B cell (primary cell): ENCODE measurements at regions of chr19 and their contacts with region 1.

Region 1: DNA sequence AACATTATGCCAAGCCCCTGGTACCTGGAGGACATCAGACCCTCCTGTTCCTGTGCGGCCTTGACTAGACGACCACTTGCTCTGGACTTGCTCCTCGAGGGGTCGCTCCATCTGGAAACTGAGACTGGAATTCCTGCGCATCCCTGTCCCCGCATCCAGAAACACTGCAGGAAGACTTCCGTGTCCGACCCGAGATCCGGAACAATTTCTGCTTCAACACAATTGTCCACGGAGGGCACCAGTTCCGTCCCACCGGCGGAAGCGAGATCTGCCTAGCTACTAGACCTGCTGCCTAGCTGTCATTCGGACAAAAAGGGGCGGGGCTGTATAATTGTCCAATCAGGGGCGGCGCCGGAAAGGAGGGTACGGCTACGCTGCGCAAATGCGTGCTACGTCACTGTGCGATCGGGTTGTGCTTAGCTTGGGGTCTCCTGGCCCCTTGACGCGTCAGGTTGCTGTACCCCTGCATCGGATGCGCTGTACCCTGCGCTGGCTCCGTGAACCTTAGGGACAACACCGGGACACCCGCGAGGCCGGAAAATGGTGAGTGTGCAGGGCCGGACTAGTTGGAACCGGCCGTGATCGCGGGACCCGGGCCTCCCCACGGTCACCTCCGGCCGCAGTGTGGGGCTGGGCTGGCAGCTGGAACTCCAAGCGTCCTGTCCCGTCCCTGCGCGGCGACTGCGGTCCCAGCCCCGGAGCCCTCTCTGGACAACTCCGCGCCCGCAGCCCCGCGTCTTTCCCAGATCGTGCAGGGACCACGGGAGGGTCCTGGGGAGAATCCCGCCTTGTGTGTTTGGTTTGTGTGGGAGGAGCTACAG is at the starts of genes ZNF490 and ZNF791:
- DNase-seq: peak; percentile 97
- ATAC-seq: peak; percentile 73
- H3K4me3 ChIP-seq: peak within 1 kb of the TSS; percentile 89 to 99 (median 98)
- H3K4me3 Mint-ChIP-seq: peak within 1 kb of the TSS; percentile 100
- H3K27ac ChIP-seq: peak within 1 kb of the TSS; percentile 93 to 96
- H3K27ac Mint-ChIP-seq: peak within 1 kb of the TSS; percentile 100
- H3K4me1 ChIP-seq: peaks cover 50 to 72% of the 10 kb centered on the region in 2 donors
- H3K4me1 Mint-ChIP-seq: peaks cover 54% of the 10 kb centered on the region
- H3K27me3 ChIP-seq: no peaks in the 10 kb centered on the region
- H3K27me3 Mint-ChIP-seq: no peaks in the 10 kb centered on the region
- CTCF ChIP-seq: no peak
- total RNA-seq, gene ZNF490: 19.9 and 21.2 TPM in 2 replicates
- total RNA-seq, gene ZNF791: 56.0 and 57.9 TPM in 2 replicates

Region 2: GRCh38 chr19:12551060-12551832 is 59.5 kb before region 1 on chr19 and contains the start of gene ZNF564:
- CTCF ChIA-PET with region 1: no interaction called
- POLR2A ChIA-PET with region 1: no interaction called
- intact Hi-C with region 1: loop called (anchors 1 kb)
- DNase-seq: peak; percentile 96
- ATAC-seq: peak; percentile 98
- H3K4me3 ChIP-seq: peak within 1 kb of the TSS; percentile 81 to 95 (median 86)
- H3K4me3 Mint-ChIP-seq: peak within 1 kb of the TSS; percentile 100
- H3K27ac ChIP-seq: peak within 1 kb of the TSS; percentile 70 to 87
- H3K27ac Mint-ChIP-seq: peak within 1 kb of the TSS; percentile 94
- H3K4me1 ChIP-seq: peaks cover 20 to 29% of the 10 kb centered on the region in 2 donors
- H3K4me1 Mint-ChIP-seq: peaks cover 45% of the 10 kb centered on the region
- H3K27me3 ChIP-seq: no peaks in the 10 kb centered on the region
- H3K27me3 Mint-ChIP-seq: no peaks in the 10 kb centered on the region
- CTCF ChIP-seq: no peak
- total RNA-seq, gene ZNF564: 31.8 and 35.8 TPM in 2 replicates

Region 3: DNA sequence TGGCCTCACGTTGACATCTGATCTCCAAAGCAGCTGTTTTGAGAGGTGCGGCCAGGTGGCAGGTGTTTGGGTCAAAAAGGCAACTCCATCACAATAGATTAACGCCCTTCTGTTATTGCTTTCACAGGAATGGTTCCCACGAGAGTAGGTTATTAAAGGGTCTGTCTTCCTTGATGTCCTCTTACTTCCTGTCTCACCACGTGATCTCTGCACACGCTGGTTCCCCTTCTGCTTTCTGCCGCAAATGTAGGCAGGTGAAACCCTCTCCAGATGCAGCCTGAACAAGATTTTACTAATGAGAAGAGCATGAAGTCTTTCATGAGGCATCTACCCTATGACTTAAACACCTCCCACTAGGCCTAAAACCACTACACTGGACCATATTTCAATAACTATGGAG is 36.7 kb before region 1 on chr19:
- CTCF ChIA-PET with region 1: interaction called, 4 read pairs
- POLR2A ChIA-PET with region 1: interaction called, 4 read pairs
- intact Hi-C with region 1: loop called (anchors 1 kb)
- DNase-seq: peak; percentile 85
- ATAC-seq: peak; percentile 94
- H3K4me3 ChIP-seq: peak overlapping the region in 2 of 5 experiments; percentile 17 to 21
- H3K4me3 Mint-ChIP-seq: peak overlapping the region; percentile 61
- H3K27ac ChIP-seq: peak overlapping the region; percentile 77 to 85
- H3K27ac Mint-ChIP-seq: peak overlapping the region; percentile 88
- H3K4me1 ChIP-seq: peaks cover 31 to 43% of the 10 kb centered on the region in 2 donors
- H3K4me1 Mint-ChIP-seq: peaks cover 35% of the 10 kb centered on the region
- H3K27me3 ChIP-seq: no peaks in the 10 kb centered on the region
- H3K27me3 Mint-ChIP-seq: no peaks in the 10 kb centered on the region
- CTCF ChIP-seq: no peak

Region 4: DNA sequence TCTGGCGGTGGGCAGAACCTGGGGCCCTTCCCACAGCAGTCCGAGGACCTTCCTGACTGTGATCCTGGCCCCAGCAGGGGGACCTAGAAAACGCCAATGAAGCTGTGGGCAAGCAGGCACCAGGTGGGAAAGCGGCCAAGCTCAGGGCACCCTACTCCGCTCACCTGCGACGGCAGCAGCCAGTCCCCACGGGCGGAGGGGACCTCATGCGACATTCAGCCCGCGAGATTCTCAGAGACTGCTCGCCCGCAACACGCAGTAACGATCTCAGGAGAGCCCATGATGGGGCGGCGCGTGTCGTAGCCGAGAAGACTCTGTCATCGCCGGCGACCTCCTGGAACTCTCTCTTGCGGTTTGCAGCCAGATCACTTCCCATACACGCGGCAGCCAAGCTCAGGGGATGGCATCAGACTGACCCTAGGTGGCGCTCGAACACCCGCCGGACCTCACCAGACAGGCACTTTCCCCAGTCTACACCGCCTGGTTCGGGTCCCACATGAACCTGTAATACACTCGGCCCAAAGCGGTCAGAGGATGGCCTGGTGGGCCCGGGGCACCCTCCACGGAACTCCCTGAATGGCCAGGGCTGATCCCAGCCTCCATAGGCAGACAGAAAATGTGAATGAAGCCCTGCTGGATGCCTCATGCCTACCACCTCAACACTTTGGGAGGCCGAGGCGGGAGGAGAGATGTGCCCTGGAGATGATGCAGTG is 29.3 kb after region 1 on chr19:
- CTCF ChIA-PET with region 1: interaction called, 8 read pairs
- POLR2A ChIA-PET with region 1: interaction called, 10 read pairs
- intact Hi-C with region 1: loop called (anchors 1 kb)
- DNase-seq: peak; percentile 91
- ATAC-seq: peak; percentile 95
- H3K4me3 ChIP-seq: peak overlapping the region in 4 of 5 experiments; percentile 18 to 48 (median 36)
- H3K4me3 Mint-ChIP-seq: peak overlapping the region; percentile 82
- H3K27ac ChIP-seq: peak overlapping the region; percentile 22 to 60
- H3K27ac Mint-ChIP-seq: peak overlapping the region; percentile 78
- H3K4me1 ChIP-seq: peaks cover 8 to 12% of the 10 kb centered on the region in 2 donors
- H3K4me1 Mint-ChIP-seq: peaks cover 18% of the 10 kb centered on the region
- H3K27me3 ChIP-seq: no peaks in the 10 kb centered on the region
- H3K27me3 Mint-ChIP-seq: no peaks in the 10 kb centered on the region
- CTCF ChIP-seq: peak; percentile 89

Region 5: GRCh38 chr19:12672744-12673143 is 62.0 kb after region 1 on chr19:
- CTCF ChIA-PET with region 1: interaction called, 13 read pairs
- POLR2A ChIA-PET with region 1: interaction called, 16 read pairs
- intact Hi-C with region 1: no loop called
- DNase-seq: no peak
- ATAC-seq: no peak
- H3K4me3 ChIP-seq: no peak overlapping the region
- H3K4me3 Mint-ChIP-seq: no peak overlapping the region
- H3K27ac ChIP-seq: no peak overlapping the region
- H3K27ac Mint-ChIP-seq: no peak overlapping the region
- H3K4me1 ChIP-seq: peaks cover 20 to 32% of the 10 kb centered on the region in 2 donors
- H3K4me1 Mint-ChIP-seq: peaks cover 40% of the 10 kb centered on the region
- H3K27me3 ChIP-seq: no peaks in the 10 kb centered on the region
- H3K27me3 Mint-ChIP-seq: no peaks in the 10 kb centered on the region
- CTCF ChIP-seq: no peak

Region 6: DNA sequence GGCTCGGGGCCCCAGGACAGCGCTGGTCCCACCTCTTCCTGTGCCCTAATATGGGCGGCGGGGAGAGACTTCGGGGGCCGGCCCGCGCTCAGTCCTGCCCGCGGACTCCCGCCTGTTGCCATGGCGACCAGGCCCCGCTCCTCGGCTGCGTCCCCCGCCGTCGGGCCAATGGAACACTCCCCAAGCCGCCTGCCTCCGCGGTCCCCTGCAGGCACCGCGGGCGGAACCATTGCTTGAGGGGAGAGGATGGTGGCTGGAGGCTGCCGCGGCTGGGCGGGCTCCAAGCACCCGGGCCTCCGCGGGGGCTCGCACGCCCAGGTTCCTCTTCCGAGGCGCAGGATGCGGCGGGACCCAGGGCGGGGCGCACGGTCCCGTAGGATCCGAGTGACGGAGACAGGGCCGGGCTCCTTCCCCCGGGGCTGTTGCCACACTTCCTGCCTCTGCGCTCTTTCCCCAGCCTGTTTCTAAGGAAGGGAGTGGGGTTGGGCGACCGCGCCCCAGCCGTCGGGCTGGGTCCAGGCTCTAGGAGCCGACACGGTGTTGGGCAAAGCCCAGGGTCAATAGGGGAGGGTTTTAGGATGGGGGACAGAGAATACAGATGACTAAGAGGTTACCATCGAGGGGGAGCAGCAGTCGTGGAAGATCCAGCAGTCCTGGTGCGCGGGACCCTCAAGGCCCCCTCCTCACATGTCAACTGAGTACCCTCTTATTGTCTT is 179.3 kb after region 1 on chr19:
- CTCF ChIA-PET with region 1: no interaction called
- POLR2A ChIA-PET with region 1: interaction called, 3 read pairs
- intact Hi-C with region 1: loop called (anchors 5 kb)
- DNase-seq: peak; percentile 99
- ATAC-seq: peak; percentile 46
- H3K4me3 ChIP-seq: peak overlapping the region; percentile 94 to 99 (median 97)
- H3K4me3 Mint-ChIP-seq: peak overlapping the region; percentile 97
- H3K27ac ChIP-seq: peak overlapping the region; percentile 95 to 97
- H3K27ac Mint-ChIP-seq: peak overlapping the region; percentile 99
- H3K4me1 ChIP-seq: peaks cover 52 to 64% of the 10 kb centered on the region in 2 donors
- H3K4me1 Mint-ChIP-seq: peaks cover 41% of the 10 kb centered on the region
- H3K27me3 ChIP-seq: no peaks in the 10 kb centered on the region
- H3K27me3 Mint-ChIP-seq: no peaks in the 10 kb centered on the region
- CTCF ChIP-seq: no peak